Activated CD8-positive, alpha-beta T cell treated with anti-CD3 and anti-CD28 coated beads for 36 hours (primary cell): ENCODE measurements at regions of chr11 and their contacts with region 1.

Region 1: DNA sequence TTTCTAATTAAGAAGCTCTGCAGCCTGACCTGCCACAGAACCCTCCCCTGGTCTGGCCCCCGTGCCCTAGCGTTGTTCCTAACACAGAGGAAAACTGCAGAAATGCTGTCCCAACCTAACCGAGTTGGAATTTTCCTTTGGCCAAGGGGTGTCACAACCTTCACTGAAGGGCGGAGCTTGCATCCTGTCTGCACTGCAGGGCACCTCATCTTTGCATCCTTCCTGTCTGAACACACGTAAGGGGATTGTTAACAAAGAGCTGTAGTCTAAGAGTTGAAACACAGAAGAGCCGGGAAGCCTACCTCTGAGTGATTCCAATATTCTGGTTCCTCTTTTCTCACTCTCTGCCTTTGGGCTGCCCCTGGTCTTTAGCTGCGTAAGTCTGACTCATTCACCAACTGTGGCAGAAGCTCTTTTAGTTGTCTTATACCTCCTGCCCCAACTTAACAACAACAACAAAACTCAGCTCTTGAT is 1.6 kb downstream of the DIXDC1 start:
- DNase-seq: peak; percentile 51
- ATAC-seq: peak; percentile 59
- H3K4me3 Mint-ChIP-seq: peak overlapping the region; percentile 75
- H3K27ac Mint-ChIP-seq: peak overlapping the region; percentile 82
- H3K4me1 Mint-ChIP-seq: peaks cover 54% of the 10 kb centered on the region
- H3K27me3 Mint-ChIP-seq: no peaks in the 10 kb centered on the region
- CTCF ChIP-seq: no peak

Region 2: DNA sequence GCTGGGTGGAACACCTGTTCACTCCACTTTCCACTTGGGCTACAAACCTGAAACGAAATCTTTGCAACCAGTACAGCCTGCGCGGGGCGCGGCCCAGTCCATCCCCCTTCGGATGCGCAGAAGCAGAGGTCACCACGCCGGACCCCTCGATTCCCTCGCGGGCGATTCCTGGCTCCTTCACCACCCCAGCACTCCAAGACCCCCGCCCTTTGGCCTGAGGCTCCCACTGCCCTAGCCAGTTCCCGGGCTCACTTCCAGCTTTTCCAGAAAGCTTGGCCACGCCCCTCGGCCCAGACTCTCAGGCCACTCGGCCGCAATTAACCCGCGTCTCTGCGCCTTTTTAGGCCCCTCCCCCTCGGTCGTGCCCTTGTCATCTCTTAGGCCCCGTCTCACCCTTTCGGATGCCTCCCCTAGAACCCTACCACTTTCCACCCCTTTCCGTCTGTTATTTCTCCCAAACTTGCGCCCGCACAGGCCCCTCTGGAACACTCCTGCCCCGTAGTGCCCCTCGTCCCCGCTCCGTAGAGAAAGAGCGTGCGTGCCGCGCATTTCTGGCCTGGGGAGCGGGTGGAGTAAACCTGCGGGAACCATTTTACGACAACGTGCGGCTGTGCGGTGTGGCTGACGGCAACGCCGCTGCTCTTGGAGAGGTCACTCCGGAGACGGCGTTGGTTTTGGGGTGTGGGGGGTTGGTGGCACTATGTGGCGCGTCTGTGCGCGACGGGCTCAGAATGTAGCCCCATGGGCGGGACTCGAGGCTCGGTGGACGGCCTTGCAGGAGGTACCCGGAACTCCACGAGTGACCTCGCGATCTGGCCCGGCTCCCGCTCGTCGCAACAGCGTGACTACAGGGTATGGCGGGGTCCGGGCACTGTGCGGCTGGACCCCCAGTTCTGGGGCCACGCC is 86.3 kb after region 1 on chr11 and contains the start of gene DLAT:
- CTCF ChIA-PET with region 1: interaction called, 3 read pairs
- POLR2A ChIA-PET with region 1: interaction called, 3 read pairs
- intact Hi-C with region 1: loop called (anchors 10 kb)
- DNase-seq: peak; percentile 91
- ATAC-seq: peak; percentile 90
- H3K4me3 Mint-ChIP-seq: peak within 1 kb of the TSS; percentile 99
- H3K27ac Mint-ChIP-seq: peak within 1 kb of the TSS; percentile 100
- H3K4me1 Mint-ChIP-seq: peaks cover 27% of the 10 kb centered on the region
- H3K27me3 Mint-ChIP-seq: no peaks in the 10 kb centered on the region
- CTCF ChIP-seq: no peak
- total RNA-seq, gene DLAT: 50.3 to 51.4 TPM